B cell (primary cell): ENCODE measurements at regions of chr1 and their contacts with region 1.

Region 1: DNA sequence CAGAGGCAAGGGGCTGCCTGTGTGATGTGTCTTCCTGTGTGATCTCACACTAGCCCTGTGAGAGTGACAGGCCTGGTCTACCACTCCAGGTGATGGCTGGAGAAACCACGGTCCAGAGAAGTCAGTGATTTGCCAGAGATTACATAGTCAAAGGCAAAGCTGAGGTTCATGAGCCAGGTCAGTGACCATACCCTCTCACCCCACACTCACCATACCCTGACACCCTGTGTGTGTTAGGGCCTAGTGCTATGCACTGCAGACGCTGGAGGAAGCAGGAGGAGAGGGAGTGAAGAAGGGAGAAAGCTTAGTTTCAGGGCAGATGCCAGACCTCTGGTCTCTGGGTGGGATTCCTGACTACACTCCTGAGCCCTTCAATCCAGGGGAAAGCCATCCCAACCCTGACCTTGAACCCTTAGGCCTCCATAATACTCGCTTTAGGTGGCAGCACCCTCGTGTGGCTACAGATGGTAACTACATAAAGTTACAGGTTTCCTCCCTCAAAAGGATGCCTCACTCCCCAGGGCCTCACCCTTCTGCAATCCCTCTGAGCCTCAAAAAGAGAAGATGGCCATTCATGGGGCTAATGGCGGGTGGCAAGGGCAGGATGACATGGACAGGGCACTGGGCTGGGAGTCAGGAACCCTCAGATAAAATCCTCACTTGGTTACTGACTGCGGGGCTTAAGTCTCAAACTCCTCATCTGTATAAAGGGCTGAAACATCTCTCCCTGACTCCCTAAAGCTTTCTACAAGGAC is 20.8 kb upstream of the SDC3 start:
- DNase-seq: peak; percentile 65
- ATAC-seq: peak; percentile 71
- H3K4me3 ChIP-seq: no peak overlapping the region
- H3K4me3 Mint-ChIP-seq: no peak overlapping the region
- H3K27ac ChIP-seq: no peak overlapping the region
- H3K27ac Mint-ChIP-seq: peak overlapping the region; percentile 26
- H3K4me1 ChIP-seq: peaks cover 0 to 11% of the 10 kb centered on the region in 2 donors
- H3K4me1 Mint-ChIP-seq: peaks cover 13% of the 10 kb centered on the region
- H3K27me3 ChIP-seq: no peaks in the 10 kb centered on the region
- H3K27me3 Mint-ChIP-seq: no peaks in the 10 kb centered on the region
- CTCF ChIP-seq: peak; percentile 86

Region 2: GRCh38 chr1:29230553-29231378 is 1698.5 kb before region 1 on chr1 and contains the start of gene MECR:
- CTCF ChIA-PET with region 1: no interaction called
- POLR2A ChIA-PET with region 1: no interaction called
- intact Hi-C with region 1: loop called (anchors 10 kb)
- DNase-seq: peak; percentile 93
- ATAC-seq: peak; percentile 96
- H3K4me3 ChIP-seq: peak within 1 kb of the TSS; percentile 69 to 95 (median 84)
- H3K4me3 Mint-ChIP-seq: peak within 1 kb of the TSS; percentile 91
- H3K27ac ChIP-seq: peak within 1 kb of the TSS; percentile 20 to 74
- H3K27ac Mint-ChIP-seq: peak within 1 kb of the TSS; percentile 82
- H3K4me1 ChIP-seq: peaks cover 12 to 16% of the 10 kb centered on the region in 2 donors
- H3K4me1 Mint-ChIP-seq: peaks cover 14% of the 10 kb centered on the region
- H3K27me3 ChIP-seq: peaks cover 0 to 9% (median 4%) of the 10 kb centered on the region in 4 experiments
- H3K27me3 Mint-ChIP-seq: peaks cover 18% of the 10 kb centered on the region
- CTCF ChIP-seq: no peak
- total RNA-seq, gene MECR: 14.0 and 15.9 TPM in 2 replicates

Region 3: DNA sequence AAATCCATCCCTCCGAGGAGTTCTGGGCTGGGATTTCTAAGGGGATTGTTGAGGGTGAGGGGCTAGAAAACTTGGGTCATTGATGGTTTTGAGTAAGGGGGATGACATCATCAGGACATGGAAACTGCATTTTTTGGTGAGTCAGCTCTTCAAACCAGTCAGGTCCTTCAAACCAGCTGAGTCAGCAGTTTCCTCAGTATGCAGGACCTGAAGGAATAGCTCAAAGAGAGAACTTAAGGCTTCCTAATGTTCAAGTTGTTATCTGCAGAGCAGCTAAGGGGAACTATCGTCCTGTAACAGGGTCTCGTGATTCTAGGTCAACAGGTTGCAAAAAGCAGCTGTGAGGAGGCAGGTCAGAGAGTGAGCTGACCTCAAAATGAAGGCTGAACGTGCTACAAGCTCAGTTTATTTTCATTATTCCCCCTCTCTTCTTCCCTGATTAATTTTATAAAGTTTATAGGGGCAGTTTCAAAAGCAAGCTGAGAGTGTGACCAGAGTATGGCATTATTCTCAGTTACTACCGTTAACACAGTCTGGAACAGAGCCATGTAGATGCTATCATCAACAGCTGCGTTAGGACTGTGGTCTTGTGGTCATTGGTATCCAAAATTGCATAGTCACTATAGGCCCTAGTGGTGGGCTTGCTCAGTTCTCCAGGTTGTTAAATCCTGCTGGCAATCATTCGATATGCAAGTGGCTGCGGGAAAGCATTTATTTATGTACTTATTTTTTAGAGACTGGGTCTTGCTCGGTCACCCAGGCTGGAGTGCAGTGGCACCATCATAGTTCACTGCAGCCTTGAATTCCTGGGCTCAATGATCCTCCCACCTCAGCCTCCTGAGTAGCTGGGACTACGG is 10.1 kb before region 1 on chr1:
- CTCF ChIA-PET with region 1: interaction called, 11 read pairs
- POLR2A ChIA-PET with region 1: no interaction called
- intact Hi-C with region 1: no loop called
- DNase-seq: no peak
- ATAC-seq: no peak
- H3K4me3 ChIP-seq: no peak overlapping the region
- H3K4me3 Mint-ChIP-seq: no peak overlapping the region
- H3K27ac ChIP-seq: no peak overlapping the region
- H3K27ac Mint-ChIP-seq: no peak overlapping the region
- H3K4me1 ChIP-seq: no peaks in the 10 kb centered on the region
- H3K4me1 Mint-ChIP-seq: no peaks in the 10 kb centered on the region
- H3K27me3 ChIP-seq: peaks cover 0 to 4% (median 0%) of the 10 kb centered on the region in 4 experiments
- H3K27me3 Mint-ChIP-seq: peaks cover 18% of the 10 kb centered on the region
- CTCF ChIP-seq: no peak

Region 4: DNA sequence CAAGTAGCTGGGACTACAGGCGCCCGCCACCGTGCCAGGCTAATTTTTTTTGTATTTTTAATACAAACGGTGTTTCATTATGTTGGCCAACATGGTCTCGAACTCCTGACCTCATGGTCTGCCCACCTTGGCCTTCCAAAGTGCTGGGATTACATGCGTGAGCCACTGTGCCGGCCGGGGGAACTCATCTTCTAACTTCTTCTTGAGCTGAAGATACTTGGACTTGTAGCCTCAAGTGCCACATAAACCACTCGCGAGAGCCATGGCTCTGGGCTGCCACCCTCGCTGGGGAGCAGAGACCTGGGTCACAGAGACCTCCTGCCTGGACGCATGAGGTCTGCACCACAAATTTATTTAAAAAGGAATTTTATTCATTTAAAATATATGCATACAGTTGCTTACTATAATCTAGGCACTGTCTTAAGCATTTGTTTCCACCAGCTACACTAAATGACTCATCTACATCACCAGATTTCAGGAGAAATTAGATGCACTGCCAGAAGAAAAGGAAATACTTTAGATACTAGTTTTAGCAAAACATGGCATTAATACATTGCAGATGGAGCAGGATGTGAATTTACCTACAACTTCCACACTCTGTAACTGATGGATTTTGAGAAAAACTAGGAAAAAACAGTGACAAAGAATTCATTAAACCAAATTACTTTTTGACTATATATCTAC is 166.1 kb after region 1 on chr1:
- CTCF ChIA-PET with region 1: no interaction called
- POLR2A ChIA-PET with region 1: no interaction called
- intact Hi-C with region 1: no loop called
- DNase-seq: no peak
- ATAC-seq: no peak
- H3K4me3 ChIP-seq: no peak overlapping the region
- H3K4me3 Mint-ChIP-seq: no peak overlapping the region
- H3K27ac ChIP-seq: no peak overlapping the region
- H3K27ac Mint-ChIP-seq: no peak overlapping the region
- H3K4me1 ChIP-seq: no peaks in the 10 kb centered on the region
- H3K4me1 Mint-ChIP-seq: no peaks in the 10 kb centered on the region
- H3K27me3 ChIP-seq: no peaks in the 10 kb centered on the region
- H3K27me3 Mint-ChIP-seq: no peaks in the 10 kb centered on the region
- CTCF ChIP-seq: no peak